ENCODE measurements at regions of chr1 and their contacts with region 1.

Region 1: GRCh38 chr1:156054500-156055280 is at the start of gene LAMTOR2:
- DNase-seq: peak; percentile 91 to 95 (median 93)
- H3K4me3 ChIP-seq: peak within 1 kb of the TSS; percentile 96 to 99
- H3K4me3 Mint-ChIP-seq: peak within 1 kb of the TSS; percentile 93 to 98 (median 96)
- H3K27ac ChIP-seq: peak within 1 kb of the TSS; percentile 84
- H3K27ac Mint-ChIP-seq: peak within 1 kb of the TSS; percentile 93 to 99 (median 96)
- H3K4me1 ChIP-seq: peaks cover 17% of the 10 kb centered on the region
- H3K4me1 Mint-ChIP-seq: peaks cover 13 to 48% (median 28%) of the 10 kb centered on the region in 4 donors
- H3K27me3 ChIP-seq: no peaks in the 10 kb centered on the region
- H3K27me3 Mint-ChIP-seq: no peaks in the 10 kb centered on the region
- total RNA-seq, gene LAMTOR2: 33.0 to 35.5 TPM

Region 2: GRCh38 chr1:155185351-155186066 is 869.2 kb before region 1 on chr1:
- CTCF ChIA-PET with region 1: no interaction called
- POLR2A ChIA-PET with region 1: no interaction called
- intact Hi-C with region 1: no loop called
- DNase-seq: peak in 1 of 5 donors; percentile 38
- H3K4me3 ChIP-seq: no peak overlapping the region
- H3K4me3 Mint-ChIP-seq: no peak overlapping the region
- H3K27ac ChIP-seq: no peak overlapping the region
- H3K27ac Mint-ChIP-seq: peak overlapping the region in 2 of 7 donors; percentile 9 to 29
- H3K4me1 ChIP-seq: no peaks in the 10 kb centered on the region
- H3K4me1 Mint-ChIP-seq: peaks cover 4 to 13% (median 5%) of the 10 kb centered on the region in 4 donors
- H3K27me3 ChIP-seq: no peaks in the 10 kb centered on the region
- H3K27me3 Mint-ChIP-seq: no peaks in the 10 kb centered on the region

Region 3: DNA sequence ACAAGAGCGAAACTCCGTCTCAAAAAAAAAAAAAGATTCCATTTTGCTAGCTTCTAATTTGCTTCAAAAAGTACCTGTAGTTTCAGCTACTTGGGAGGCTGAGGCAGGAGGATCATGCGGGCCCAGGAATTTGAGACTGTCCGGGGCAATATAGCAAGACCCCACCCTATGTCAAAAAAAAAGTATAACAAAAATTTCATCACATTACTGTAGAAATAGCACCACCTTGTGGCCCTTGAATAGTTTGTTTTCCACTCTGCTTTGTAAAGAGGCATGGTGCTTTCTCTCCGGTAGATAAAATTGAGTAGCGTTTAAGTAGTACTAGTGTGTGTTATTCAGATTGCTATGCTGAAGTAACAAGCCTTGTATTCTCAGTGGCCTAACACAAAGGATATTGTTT is 462.9 kb before region 1 on chr1:
- CTCF ChIA-PET with region 1: no interaction called
- POLR2A ChIA-PET with region 1: no interaction called
- intact Hi-C with region 1: no loop called
- DNase-seq: peak in 4 of 5 donors; percentile 59 to 68 (median 62)
- H3K4me3 ChIP-seq: no peak overlapping the region
- H3K4me3 Mint-ChIP-seq: no peak overlapping the region
- H3K27ac ChIP-seq: no peak overlapping the region
- H3K27ac Mint-ChIP-seq: no peak overlapping the region
- H3K4me1 ChIP-seq: no peaks in the 10 kb centered on the region
- H3K4me1 Mint-ChIP-seq: peaks cover 0 to 3% (median 3%) of the 10 kb centered on the region in 4 donors
- H3K27me3 ChIP-seq: no peaks in the 10 kb centered on the region
- H3K27me3 Mint-ChIP-seq: no peaks in the 10 kb centered on the region

Region 4: DNA sequence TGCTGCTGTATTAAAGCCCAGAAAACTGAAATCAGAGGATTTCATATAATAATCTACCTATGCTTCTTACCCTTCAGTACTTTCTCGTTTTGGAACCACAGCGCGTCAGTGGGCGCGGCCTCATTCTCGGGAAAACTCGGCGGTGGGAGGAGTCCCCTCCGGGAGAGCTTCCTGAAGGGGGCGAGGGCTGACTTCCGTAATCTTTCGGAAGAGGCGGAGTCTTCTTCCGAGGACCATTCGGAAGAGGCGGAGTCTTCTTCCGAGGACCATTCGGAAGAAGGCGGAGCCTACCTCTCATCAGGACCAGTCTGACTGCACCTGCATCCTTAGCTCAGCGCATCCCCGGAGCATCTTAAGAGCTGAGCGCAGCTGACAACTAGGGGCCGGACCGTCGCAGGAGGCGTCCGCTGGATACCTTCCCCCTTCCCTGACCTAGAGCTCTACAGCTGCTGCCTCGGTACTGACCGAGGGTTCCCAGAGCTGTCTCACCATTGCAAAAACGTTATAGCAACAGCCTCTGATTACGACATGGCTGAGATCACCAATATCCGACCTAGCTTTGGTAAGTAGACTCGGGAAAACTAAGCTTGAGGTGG is 195.4 kb before region 1 on chr1 and contains the start of gene SYT11:
- CTCF ChIA-PET with region 1: no interaction called
- POLR2A ChIA-PET with region 1: interaction called, 5 read pairs
- intact Hi-C with region 1: loop called (anchors 2 kb)
- DNase-seq: peak; percentile 88 to 94 (median 91)
- H3K4me3 ChIP-seq: peak within 1 kb of the TSS; percentile 36 to 68
- H3K4me3 Mint-ChIP-seq: peak within 1 kb of the TSS; percentile 88 to 99 (median 90)
- H3K27ac ChIP-seq: peak within 1 kb of the TSS; percentile 73
- H3K27ac Mint-ChIP-seq: peak within 1 kb of the TSS; percentile 88 to 100 (median 96)
- H3K4me1 ChIP-seq: peaks cover 48% of the 10 kb centered on the region
- H3K4me1 Mint-ChIP-seq: peaks cover 18 to 53% (median 33%) of the 10 kb centered on the region in 4 donors
- H3K27me3 ChIP-seq: no peaks in the 10 kb centered on the region
- H3K27me3 Mint-ChIP-seq: no peaks in the 10 kb centered on the region
- total RNA-seq, gene SYT11: 17.7 to 18.2 TPM

Region 5: GRCh38 chr1:155911156-155912055 is 143.3 kb before region 1 on chr1 and contains the start of gene RIT1:
- CTCF ChIA-PET with region 1: no interaction called
- POLR2A ChIA-PET with region 1: no interaction called
- intact Hi-C with region 1: loop called (anchors 1 kb)
- DNase-seq: peak; percentile 78 to 87 (median 80)
- H3K4me3 ChIP-seq: peak within 1 kb of the TSS; percentile 85 to 86
- H3K4me3 Mint-ChIP-seq: peak within 1 kb of the TSS; percentile 92 to 99 (median 98)
- H3K27ac ChIP-seq: peak within 1 kb of the TSS; percentile 79
- H3K27ac Mint-ChIP-seq: peak within 1 kb of the TSS; percentile 86 to 99 (median 98)
- H3K4me1 ChIP-seq: peaks cover 21% of the 10 kb centered on the region
- H3K4me1 Mint-ChIP-seq: peaks cover 16 to 28% (median 21%) of the 10 kb centered on the region in 4 donors
- H3K27me3 ChIP-seq: no peaks in the 10 kb centered on the region
- H3K27me3 Mint-ChIP-seq: no peaks in the 10 kb centered on the region
- total RNA-seq, gene RIT1: 45.0 to 48.0 TPM

Region 6: DNA sequence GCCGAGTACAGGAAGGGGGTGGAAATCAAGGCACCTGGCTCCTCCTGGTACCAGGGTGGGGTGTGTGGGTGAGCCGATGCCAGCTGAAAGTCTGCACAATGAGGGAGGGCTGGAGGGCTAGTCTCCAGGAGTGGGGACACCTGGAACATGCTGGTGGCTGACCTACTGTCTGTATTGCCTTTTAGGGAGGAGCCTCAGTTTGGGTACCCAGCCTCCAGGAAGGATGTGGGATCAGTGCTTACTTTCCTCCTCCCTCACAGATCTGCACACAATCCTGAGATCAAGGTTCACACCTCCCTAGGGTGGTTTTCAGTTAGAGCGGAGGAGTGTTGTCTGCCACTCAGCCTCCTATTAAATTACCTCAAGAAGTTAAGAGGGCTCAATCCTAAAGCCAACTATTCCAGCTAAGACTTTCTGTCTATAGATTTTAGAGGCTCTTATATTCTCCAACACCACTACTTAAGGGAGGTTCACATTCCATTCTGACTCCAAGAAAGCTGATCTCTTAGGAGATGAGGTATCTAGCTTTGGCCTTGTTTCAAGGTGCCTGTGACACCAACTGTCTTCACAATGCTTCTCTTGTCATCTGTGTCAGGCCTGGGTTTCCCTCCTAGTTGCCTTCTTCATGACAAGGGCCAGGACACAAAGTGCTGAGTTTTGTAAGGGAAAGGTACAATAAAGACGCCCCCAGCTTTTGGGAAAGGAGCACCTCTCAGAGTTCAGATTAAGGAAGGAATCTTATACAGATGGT is 49.7 kb before region 1 on chr1:
- CTCF ChIA-PET with region 1: no interaction called
- POLR2A ChIA-PET with region 1: no interaction called
- intact Hi-C with region 1: loop called (anchors 5 kb)
- DNase-seq: peak; percentile 39 to 55 (median 48)
- H3K4me3 ChIP-seq: peak overlapping the region in 1 of 2 donors; percentile 36
- H3K4me3 Mint-ChIP-seq: peak overlapping the region; percentile 38 to 79 (median 61)
- H3K27ac ChIP-seq: peak overlapping the region; percentile 18
- H3K27ac Mint-ChIP-seq: peak overlapping the region; percentile 78 to 94 (median 92)
- H3K4me1 ChIP-seq: peaks cover 22% of the 10 kb centered on the region
- H3K4me1 Mint-ChIP-seq: peaks cover 22 to 45% (median 30%) of the 10 kb centered on the region in 4 donors
- H3K27me3 ChIP-seq: no peaks in the 10 kb centered on the region
- H3K27me3 Mint-ChIP-seq: no peaks in the 10 kb centered on the region

Region 7: DNA sequence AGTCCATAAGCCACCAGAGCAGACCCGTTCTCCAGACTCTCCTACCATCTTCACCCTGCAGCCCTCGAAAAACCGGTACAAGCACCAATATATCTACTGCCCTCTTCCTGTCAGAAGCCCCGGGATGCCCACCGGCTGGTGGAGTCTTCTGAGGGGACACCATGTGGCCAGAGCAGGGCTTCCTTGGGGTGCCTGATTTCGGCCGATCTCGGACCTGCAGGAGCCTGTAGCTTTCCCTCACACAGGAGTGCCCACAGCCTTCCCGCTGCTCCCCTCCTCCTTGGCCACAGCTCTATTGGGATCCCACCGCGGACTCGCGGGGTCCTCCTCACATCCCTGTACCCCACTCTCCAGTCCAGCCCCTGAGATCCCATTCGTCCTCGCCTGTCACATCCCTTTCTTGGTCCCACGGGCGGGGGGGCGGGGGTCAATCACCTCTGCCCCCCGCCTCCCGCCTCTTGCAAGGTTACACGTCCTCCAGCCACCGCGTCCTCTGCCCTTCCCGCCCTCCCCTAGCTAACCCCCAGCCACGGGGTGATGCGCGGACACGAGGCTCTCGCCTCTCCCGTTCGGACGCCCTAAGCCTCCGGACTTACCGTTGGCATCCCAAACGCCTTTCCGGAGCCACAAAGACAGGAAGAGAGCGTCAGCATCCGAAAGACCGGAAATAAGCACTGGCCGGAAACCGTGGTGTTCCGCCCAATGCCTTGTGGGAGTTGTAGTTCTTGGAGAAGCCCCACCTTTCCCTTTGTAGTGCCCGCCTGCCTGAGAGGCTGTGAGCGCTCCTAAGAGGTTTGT is 34.2 kb before region 1 on chr1 and contains the start of gene SSR2:
- CTCF ChIA-PET with region 1: interaction called, 6 read pairs
- POLR2A ChIA-PET with region 1: interaction called, 11 read pairs
- intact Hi-C with region 1: loop called (anchors 1 kb)
- DNase-seq: peak; percentile 85 to 92 (median 87)
- H3K4me3 ChIP-seq: peak within 1 kb of the TSS; percentile 78 to 81
- H3K4me3 Mint-ChIP-seq: peak within 1 kb of the TSS; percentile 96 to 99 (median 99)
- H3K27ac ChIP-seq: peak within 1 kb of the TSS; percentile 77
- H3K27ac Mint-ChIP-seq: peak within 1 kb of the TSS; percentile 82 to 99 (median 98)
- H3K4me1 ChIP-seq: peaks cover 17% of the 10 kb centered on the region
- H3K4me1 Mint-ChIP-seq: peaks cover 20 to 44% (median 30%) of the 10 kb centered on the region in 4 donors
- H3K27me3 ChIP-seq: no peaks in the 10 kb centered on the region
- H3K27me3 Mint-ChIP-seq: peaks cover 0 to 2% of the 10 kb centered on the region in 2 donors
- total RNA-seq, gene SSR2: 252 to 276 TPM

Region 8: GRCh38 chr1:156082309-156083091 is 27.8 kb after region 1 on chr1 and contains the start of gene MEX3A:
- CTCF ChIA-PET with region 1: no interaction called
- POLR2A ChIA-PET with region 1: no interaction called
- intact Hi-C with region 1: loop called (anchors 1 kb)
- DNase-seq: peak; percentile 51 to 61 (median 58)
- H3K4me3 ChIP-seq: peak within 1 kb of the TSS; percentile 68 to 81
- H3K4me3 Mint-ChIP-seq: peak within 1 kb of the TSS; percentile 83 to 88 (median 86)
- H3K27ac ChIP-seq: peak within 1 kb of the TSS; percentile 43
- H3K27ac Mint-ChIP-seq: peak within 1 kb of the TSS in 3 of 7 donors; percentile 72 to 86 (median 84)
- H3K4me1 ChIP-seq: peaks cover 19% of the 10 kb centered on the region
- H3K4me1 Mint-ChIP-seq: peaks cover 5 to 15% (median 9%) of the 10 kb centered on the region in 4 donors
- H3K27me3 ChIP-seq: peaks cover 10% of the 10 kb centered on the region
- H3K27me3 Mint-ChIP-seq: peaks cover 10 to 20% of the 10 kb centered on the region in 2 donors
- total RNA-seq, gene MEX3A: not detected

Region 9: DNA sequence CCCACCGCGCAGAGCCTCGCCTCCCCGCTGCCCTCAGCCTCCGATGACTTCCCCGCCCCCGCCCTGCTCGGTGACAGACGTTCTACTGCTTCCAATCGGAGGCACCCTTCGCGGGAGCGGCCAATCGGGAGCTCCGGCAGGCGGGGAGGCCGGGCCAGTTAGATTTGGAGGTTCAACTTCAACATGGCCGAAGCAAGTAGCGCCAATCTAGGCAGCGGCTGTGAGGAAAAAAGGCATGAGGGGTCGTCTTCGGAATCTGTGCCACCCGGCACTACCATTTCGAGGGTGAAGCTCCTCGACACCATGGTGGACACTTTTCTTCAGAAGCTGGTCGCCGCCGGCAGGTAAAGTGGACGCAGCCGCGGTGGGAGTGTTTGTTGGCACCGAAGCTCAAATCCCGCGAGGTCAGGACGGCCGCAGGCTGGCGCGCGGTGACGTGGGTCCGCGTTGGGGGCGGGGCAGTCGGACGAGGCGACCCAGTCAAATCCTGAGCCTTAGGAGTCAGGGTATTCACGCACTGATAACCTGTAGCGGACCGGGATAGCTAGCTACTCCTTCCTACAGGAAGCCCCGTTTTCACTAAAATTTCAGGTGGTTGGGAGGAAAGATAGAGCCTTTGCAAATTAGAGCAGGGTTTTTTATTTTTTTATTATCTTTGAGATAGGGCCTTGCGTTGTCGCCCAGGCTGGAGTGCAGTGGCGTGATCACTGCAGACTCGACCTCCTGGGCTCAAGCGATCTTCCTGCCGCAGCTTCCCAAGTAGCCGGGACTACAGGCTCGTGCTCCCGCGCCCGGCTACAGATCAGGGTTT is 158.3 kb after region 1 on chr1 and contains the start of gene PMF1:
- CTCF ChIA-PET with region 1: no interaction called
- POLR2A ChIA-PET with region 1: interaction called, 3 read pairs
- intact Hi-C with region 1: loop called (anchors 2 kb)
- DNase-seq: peak; percentile 94 to 98 (median 95)
- H3K4me3 ChIP-seq: peak within 1 kb of the TSS; percentile 83 to 93
- H3K4me3 Mint-ChIP-seq: peak within 1 kb of the TSS; percentile 93 to 99 (median 96)
- H3K27ac ChIP-seq: peak within 1 kb of the TSS; percentile 98
- H3K27ac Mint-ChIP-seq: peak within 1 kb of the TSS; percentile 97 to 100 (median 99)
- H3K4me1 ChIP-seq: peaks cover 29% of the 10 kb centered on the region
- H3K4me1 Mint-ChIP-seq: peaks cover 15 to 43% (median 31%) of the 10 kb centered on the region in 4 donors
- H3K27me3 ChIP-seq: no peaks in the 10 kb centered on the region
- H3K27me3 Mint-ChIP-seq: no peaks in the 10 kb centered on the region
- total RNA-seq, gene PMF1: 39.0 to 40.2 TPM